ENCODE measurements at regions of chr17 and their contacts with region 1.

Region 1: DNA sequence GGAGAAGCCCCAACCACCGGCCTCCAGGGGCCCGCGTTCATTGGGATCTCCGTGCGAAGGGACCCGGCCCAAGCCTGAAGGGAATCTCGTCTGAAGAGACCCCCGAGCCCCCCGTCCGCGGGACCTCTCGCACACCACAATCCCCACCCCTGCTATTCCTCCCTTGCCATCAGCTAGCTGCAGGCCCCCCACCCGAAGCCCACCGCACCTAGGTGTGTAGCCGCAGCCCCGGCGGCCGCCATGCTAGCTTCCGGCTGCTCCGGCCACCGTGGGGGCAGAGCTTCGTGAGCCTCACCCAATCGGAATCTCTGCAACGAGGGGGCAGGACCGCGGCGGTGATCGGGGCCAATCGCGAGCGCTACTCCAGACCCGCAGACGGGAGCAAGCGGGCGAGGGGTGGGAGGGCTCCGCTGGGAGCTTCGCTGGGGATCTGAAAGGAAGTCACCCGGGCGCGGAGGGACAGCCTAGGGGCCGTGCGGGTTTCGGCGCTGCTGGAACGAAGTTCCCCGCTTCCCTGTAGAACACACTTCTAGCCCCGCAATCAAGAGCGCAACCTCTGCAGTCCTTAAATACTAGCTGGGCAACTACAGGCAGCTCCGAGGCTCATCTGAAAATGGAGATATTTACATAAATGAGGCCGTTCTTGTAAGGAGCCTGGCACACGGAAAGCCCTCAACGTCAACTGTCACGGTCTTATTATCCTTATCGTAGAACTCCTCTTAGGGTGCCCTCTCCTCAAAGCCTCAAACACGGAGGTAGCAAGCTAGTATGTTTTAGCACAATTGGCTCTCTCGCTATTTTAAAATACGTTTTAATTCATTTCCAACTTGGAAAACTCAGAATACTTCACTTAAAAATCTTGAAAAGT is at the start of gene PIGS:
- DNase-seq: peak; percentile 91
- H3K4me3 Mint-ChIP-seq: peak within 1 kb of the TSS; percentile 97
- H3K27ac Mint-ChIP-seq: peak within 1 kb of the TSS; percentile 93
- H3K4me1 Mint-ChIP-seq: peaks cover 54% of the 10 kb centered on the region
- H3K27me3 Mint-ChIP-seq: no peaks in the 10 kb centered on the region
- total RNA-seq, gene PIGS: 65.1 and 70.9 TPM in 2 replicates

Region 2: GRCh38 chr17:28552246-28552999 is 19.1 kb before region 1 on chr17 and contains the start of gene UNC119:
- intact Hi-C with region 1: loop called (anchors 2 kb)
- DNase-seq: peak; percentile 70
- H3K4me3 Mint-ChIP-seq: peak within 1 kb of the TSS; percentile 97
- H3K27ac Mint-ChIP-seq: peak within 1 kb of the TSS; percentile 76
- H3K4me1 Mint-ChIP-seq: peaks cover 47% of the 10 kb centered on the region
- H3K27me3 Mint-ChIP-seq: no peaks in the 10 kb centered on the region
- total RNA-seq, gene UNC119: 55.3 and 63.9 TPM in 2 replicates

Region 3: DNA sequence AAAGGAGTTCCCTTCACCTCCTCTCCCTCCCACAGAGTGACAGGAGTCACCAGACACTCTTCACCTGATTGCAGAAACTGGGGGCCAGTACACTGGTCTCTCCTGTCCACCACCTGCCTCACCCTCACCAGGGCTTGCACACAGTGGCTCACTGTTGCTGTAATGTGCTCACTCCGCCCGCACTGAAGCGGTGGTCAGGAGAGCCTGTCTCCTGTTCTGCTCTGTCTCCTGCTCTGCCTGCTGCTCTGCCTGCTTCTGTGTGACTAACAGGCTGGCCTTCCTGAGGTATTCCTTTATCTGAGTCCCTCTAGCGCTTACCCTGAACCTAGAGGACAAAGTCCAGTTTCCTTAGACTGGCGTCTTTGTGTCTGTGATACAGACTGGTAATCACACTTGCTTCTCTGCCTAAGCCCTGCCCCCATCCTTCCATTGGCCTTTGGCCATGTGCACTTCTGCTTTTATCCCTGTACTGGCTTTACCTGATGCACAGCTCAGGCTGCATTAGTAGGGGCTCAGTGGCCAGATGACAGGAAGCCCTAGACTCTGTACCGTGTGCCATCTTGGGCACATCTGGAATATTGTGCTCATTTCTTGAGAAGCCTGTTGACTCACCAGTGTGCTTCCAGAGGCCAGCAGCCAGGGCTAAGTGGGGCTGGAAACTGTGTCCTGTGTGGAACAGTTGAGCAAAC is 126.9 kb after region 1 on chr17:
- intact Hi-C with region 1: no loop called
- DNase-seq: no peak
- H3K4me3 Mint-ChIP-seq: no peak overlapping the region
- H3K27ac Mint-ChIP-seq: no peak overlapping the region
- H3K4me1 Mint-ChIP-seq: no peaks in the 10 kb centered on the region
- H3K27me3 Mint-ChIP-seq: no peaks in the 10 kb centered on the region

Measured in activated T-helper 2 cell treated with anti-CD3 and anti-CD28 coated beads, Interferon-gamma antibody, Interleukin-2, Interleukin-4, amounts not matched to agents 10 μg/mL and 5 μg/mL and 100 μg/mL, durations not matched to agents 14 hours and 24 hours and 36 hours (primary cell).